ENCODE measurements at regions of chr4 and their contacts with region 1.

Region 1: DNA sequence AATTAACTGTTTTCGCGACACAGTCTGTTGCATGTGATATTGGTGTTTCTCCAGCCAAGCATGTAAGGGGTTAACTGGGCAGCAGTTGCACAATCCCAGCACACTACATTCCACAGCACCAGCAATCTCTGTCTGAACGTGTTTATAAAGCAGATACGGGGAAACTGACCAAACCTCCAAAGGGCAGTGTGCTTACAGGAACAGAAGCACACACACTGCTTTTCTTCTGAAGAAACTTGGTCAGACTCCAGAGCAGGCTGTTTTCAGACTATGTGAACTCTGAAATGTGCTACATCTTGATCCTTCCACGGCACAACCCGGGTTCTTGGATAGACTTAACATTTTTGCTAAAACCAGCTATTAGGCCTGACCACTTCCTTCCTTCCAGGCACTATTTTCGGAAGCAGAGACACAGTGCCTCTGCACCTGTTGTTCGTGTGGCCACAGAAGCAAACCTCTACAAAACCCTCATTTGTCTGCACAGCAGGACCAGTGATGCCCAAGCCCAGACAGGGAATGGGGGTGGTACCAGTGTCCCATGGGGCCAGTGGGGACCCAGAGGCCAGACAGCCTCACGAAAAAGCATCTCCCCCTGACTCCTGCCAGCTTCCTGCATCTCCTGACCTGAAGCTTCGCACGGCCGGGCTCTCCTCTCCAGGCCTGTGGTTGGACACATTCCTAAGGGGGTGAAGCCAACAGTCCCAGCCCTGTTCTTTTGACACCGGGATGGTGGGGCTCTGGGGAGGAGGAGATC is 90.1 kb downstream of the IRF2 start:
- DNase-seq: peak; percentile 49
- H3K4me3 Mint-ChIP-seq: peak overlapping the region; percentile 60
- H3K27ac Mint-ChIP-seq: peak overlapping the region; percentile 89
- H3K4me1 Mint-ChIP-seq: peaks cover 49% of the 10 kb centered on the region
- H3K27me3 Mint-ChIP-seq: no peaks in the 10 kb centered on the region
- CTCF ChIP-seq: no peak

Region 2: GRCh38 chr4:184287697-184288255 is 96.5 kb before region 1 on chr4:
- CTCF ChIA-PET with region 1: interaction called, 7 read pairs
- intact Hi-C with region 1: loop called (anchors 1 kb)
- DNase-seq: peak; percentile 66
- H3K4me3 Mint-ChIP-seq: peak overlapping the region; percentile 62
- H3K27ac Mint-ChIP-seq: peak overlapping the region; percentile 87
- H3K4me1 Mint-ChIP-seq: peaks cover 22% of the 10 kb centered on the region
- H3K27me3 Mint-ChIP-seq: no peaks in the 10 kb centered on the region
- CTCF ChIP-seq: no peak

Region 3: GRCh38 chr4:184343502-184344177 is 40.6 kb before region 1 on chr4:
- CTCF ChIA-PET with region 1: interaction called, 6 read pairs
- intact Hi-C with region 1: loop called (anchors 2 kb)
- DNase-seq: peak; percentile 65
- H3K4me3 Mint-ChIP-seq: peak overlapping the region; percentile 67
- H3K27ac Mint-ChIP-seq: peak overlapping the region; percentile 45
- H3K4me1 Mint-ChIP-seq: peaks cover 59% of the 10 kb centered on the region
- H3K27me3 Mint-ChIP-seq: no peaks in the 10 kb centered on the region
- CTCF ChIP-seq: no peak

Region 4: DNA sequence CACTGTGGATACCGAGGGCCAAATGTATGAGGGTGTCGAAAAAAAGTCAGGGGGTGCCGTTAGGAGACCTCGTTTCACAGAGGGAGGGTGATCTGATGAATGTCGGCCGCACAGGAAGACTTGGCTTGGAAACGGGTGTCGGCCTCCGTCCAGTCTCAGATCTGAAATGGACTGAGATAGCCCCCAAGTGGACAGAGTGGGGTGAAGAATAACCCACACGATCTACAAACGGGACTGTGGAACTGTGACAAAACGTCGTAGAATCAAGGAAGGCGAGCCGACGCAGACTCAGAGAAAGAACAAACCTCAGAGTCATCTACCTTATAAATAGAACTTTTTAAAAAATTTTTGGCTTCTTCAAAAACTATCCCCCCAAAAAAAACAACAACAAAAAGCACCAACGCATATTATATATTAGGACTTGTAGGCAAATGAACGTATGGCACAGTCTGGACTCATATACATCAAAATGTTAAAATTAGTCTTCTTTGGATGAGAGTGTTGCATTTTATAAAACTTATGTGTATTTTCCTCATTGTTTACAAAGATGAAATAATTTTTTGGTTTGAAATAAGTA is 153.9 kb after region 1 on chr4:
- CTCF ChIA-PET with region 1: interaction called, 3 read pairs
- intact Hi-C with region 1: loop called (anchors 10 kb)
- DNase-seq: peak; percentile 70
- H3K4me3 Mint-ChIP-seq: peak overlapping the region; percentile 88
- H3K27ac Mint-ChIP-seq: peak overlapping the region; percentile 94
- H3K4me1 Mint-ChIP-seq: peaks cover 10% of the 10 kb centered on the region
- H3K27me3 Mint-ChIP-seq: no peaks in the 10 kb centered on the region
- CTCF ChIP-seq: peak; percentile 23